Gastrocnemius medialis (tissue), 4 donors: ENCODE measurements at regions of chr11 and their contacts with region 1.

Region 1: DNA sequence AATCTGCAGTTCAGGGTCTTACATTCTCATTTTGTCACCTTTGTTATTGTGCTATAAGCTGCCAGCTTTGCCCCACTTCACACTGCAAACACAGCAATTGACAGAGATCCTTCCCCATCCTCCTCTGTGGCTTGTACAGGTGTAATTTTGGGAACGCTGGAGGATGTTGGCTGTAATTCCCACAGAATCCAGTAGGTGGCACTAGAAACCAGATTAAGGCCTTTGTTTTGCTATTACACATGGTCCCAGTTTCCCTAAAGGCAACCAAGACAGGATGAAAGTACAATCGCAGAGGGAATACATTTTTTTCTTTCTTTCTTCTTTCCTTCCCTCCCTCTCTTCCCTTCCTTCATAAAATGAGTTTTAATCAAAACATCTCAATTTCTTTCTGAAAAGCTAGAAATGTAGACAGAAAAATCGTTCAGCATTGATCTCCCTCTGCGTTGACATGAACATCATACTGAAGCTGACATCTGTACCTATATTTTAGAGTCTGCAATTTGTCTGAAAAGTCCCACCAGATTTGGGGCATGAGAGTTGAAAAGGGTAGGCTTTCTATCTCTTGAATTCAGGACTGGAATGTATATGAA is 21.3 kb upstream of the NELL1 start:
- DNase-seq: no peak
- ATAC-seq: peak; percentile 41 to 42
- H3K4me3 ChIP-seq: no peak overlapping the region
- H3K27ac ChIP-seq: no peak overlapping the region
- H3K4me1 ChIP-seq: no peaks in the 10 kb centered on the region
- H3K27me3 ChIP-seq: peaks cover 0 to 15% (median 3%) of the 10 kb centered on the region in 3 donors
- CTCF ChIP-seq: peak; percentile 53 to 83 (median 77)
- POLR2A ChIP-seq: no peak

Region 2: GRCh38 chr11:20671856-20672546 is 23.9 kb after region 1 on chr11:
- in situ Hi-C with region 1: no loop called
- intact Hi-C with region 1: loop called (anchors 1 kb)
- DNase-seq: no peak
- ATAC-seq: no peak
- H3K4me3 ChIP-seq: no peak overlapping the region
- H3K27ac ChIP-seq: no peak overlapping the region
- H3K4me1 ChIP-seq: peaks cover 0 to 9% of the 10 kb centered on the region in 2 donors
- H3K27me3 ChIP-seq: peaks cover 45 to 57% (median 52%) of the 10 kb centered on the region in 3 donors
- CTCF ChIP-seq: no peak
- POLR2A ChIP-seq: no peak

Region 3: GRCh38 chr11:22304337-22304961 is 1656.4 kb after region 1 on chr11:
- in situ Hi-C with region 1: loop called in 1 of 4 experiments (anchors 25 kb)
- intact Hi-C with region 1: loop called (anchors 10 kb)
- DNase-seq: no peak
- ATAC-seq: peak in 1 of 2 donors; percentile 60
- H3K4me3 ChIP-seq: no peak overlapping the region
- H3K27ac ChIP-seq: no peak overlapping the region
- H3K4me1 ChIP-seq: no peaks in the 10 kb centered on the region
- H3K27me3 ChIP-seq: no peaks in the 10 kb centered on the region
- CTCF ChIP-seq: peak; percentile 36 to 63 (median 59)
- POLR2A ChIP-seq: no peak